ENCODE measurements at regions of chr14 and their contacts with region 1.

Region 1: GRCh38 chr14:51996148-51996746 is 6.9 kb downstream of the RTRAF start:
- DNase-seq: peak; percentile 60
- H3K4me3 ChIP-seq: no peak overlapping the region
- H3K27ac ChIP-seq: no peak overlapping the region
- H3K4me1 ChIP-seq: peaks cover 32% of the 10 kb centered on the region
- H3K27me3 ChIP-seq: no peaks in the 10 kb centered on the region

Region 2: DNA sequence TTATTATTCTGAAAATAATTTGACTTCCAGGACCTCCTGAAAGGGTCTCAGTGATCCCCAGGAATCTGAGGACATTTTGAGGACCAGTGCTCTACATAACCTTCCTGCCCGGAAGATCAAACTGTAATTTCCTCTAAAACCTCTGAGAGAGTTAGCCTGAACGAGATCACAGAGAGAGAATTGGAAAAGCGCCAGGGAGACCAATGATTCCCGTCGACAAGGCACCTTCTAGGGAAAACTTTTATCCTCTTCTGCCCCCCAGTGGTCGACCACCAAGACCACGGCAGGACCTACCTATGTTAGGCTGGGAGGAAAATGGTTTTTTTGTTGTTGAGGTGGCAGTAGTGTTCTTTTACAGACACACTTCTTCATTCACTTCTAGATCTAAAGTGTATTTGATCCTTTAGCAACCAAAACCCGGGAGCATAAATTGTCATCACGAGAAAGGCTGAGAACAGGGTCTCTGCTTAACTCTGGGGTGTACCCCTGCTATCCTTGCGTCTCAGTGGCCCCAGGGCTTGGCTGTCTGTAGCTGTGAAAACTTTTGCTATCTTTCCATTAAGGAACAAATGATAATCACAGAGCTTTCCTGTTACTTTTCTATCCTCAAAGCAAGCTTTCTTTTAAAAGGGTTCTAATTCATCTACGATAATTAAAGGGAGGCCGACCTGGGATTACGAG is 135.5 kb after region 1 on chr14:
- in situ Hi-C with region 1: loop called (anchors 5 kb)
- DNase-seq: peak; percentile 96
- H3K4me3 ChIP-seq: no peak overlapping the region
- H3K27ac ChIP-seq: no peak overlapping the region
- H3K4me1 ChIP-seq: peaks cover 4% of the 10 kb centered on the region
- H3K27me3 ChIP-seq: no peaks in the 10 kb centered on the region

Measured in GM23248 (cell line).